Heart right ventricle (tissue), 16 donors: ENCODE measurements at regions of chr18 and their contacts with region 1.

Region 1: GRCh38 chr18:8982416-8983184 is 119.9 kb upstream of the NDUFV2 start:
- DNase-seq: peak in 1 of 2 donors; percentile 22
- ATAC-seq: peak in 5 of 8 donors; percentile 35 to 75 (median 64)
- H3K4me3 ChIP-seq: no peak overlapping the region
- H3K27ac ChIP-seq: no peak overlapping the region
- H3K4me1 ChIP-seq: peaks cover 0 to 4% (median 0%) of the 10 kb centered on the region in 9 donors
- H3K27me3 ChIP-seq: no peaks in the 10 kb centered on the region
- CTCF ChIP-seq: peak in 7 of 9 donors; percentile 8 to 52 (median 40)

Region 2: DNA sequence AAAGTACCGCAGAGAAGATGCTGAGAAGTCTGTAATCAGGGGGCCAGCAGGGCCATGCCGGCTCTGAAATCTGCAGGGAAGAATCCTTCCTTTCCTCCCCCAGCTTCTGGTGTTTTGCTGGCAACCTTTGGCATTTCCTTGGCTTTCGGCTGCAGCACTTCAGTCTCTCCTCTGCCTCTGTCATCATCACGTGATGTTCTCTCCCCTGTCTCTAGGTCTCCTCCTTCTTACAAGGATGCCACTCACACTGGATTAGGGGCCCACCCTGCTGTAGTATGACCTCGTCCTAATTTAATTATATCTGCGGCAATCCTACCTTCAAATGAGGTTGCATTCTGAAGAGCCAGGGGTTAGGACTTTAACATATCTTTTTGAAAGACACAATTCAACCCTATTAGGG is 387.2 kb before region 1 on chr18:
- intact Hi-C with region 1: no loop called
- DNase-seq: no peak
- ATAC-seq: no peak
- H3K4me3 ChIP-seq: no peak overlapping the region
- H3K27ac ChIP-seq: no peak overlapping the region
- H3K4me1 ChIP-seq: no peaks in the 10 kb centered on the region
- H3K27me3 ChIP-seq: peaks cover 0 to 3% (median 0%) of the 10 kb centered on the region in 7 donors
- CTCF ChIP-seq: no peak

Region 3: GRCh38 chr18:8654503-8655451 is 327.8 kb before region 1 on chr18:
- intact Hi-C with region 1: loop called in 4 of 10 experiments (anchors 2 to 5 kb)
- DNase-seq: no peak
- ATAC-seq: no peak
- H3K4me3 ChIP-seq: no peak overlapping the region
- H3K27ac ChIP-seq: no peak overlapping the region
- H3K4me1 ChIP-seq: no peaks in the 10 kb centered on the region
- H3K27me3 ChIP-seq: peaks cover 0 to 14% (median 4%) of the 10 kb centered on the region in 7 donors
- CTCF ChIP-seq: peak; percentile 55 to 86 (median 77)

Region 4: GRCh38 chr18:8696749-8697211 is 285.8 kb before region 1 on chr18:
- intact Hi-C with region 1: loop called in 6 of 10 experiments (anchors 2 to 5 kb)
- DNase-seq: peak; percentile 65 to 79
- ATAC-seq: peak; percentile 81 to 91 (median 88)
- H3K4me3 ChIP-seq: no peak overlapping the region
- H3K27ac ChIP-seq: no peak overlapping the region
- H3K4me1 ChIP-seq: no peaks in the 10 kb centered on the region
- H3K27me3 ChIP-seq: peaks cover 0 to 15% (median 0%) of the 10 kb centered on the region in 7 donors
- CTCF ChIP-seq: peak; percentile 86 to 95 (median 92)